ENCODE measurements at regions of chr16 and their contacts with region 1.

Region 1: DNA sequence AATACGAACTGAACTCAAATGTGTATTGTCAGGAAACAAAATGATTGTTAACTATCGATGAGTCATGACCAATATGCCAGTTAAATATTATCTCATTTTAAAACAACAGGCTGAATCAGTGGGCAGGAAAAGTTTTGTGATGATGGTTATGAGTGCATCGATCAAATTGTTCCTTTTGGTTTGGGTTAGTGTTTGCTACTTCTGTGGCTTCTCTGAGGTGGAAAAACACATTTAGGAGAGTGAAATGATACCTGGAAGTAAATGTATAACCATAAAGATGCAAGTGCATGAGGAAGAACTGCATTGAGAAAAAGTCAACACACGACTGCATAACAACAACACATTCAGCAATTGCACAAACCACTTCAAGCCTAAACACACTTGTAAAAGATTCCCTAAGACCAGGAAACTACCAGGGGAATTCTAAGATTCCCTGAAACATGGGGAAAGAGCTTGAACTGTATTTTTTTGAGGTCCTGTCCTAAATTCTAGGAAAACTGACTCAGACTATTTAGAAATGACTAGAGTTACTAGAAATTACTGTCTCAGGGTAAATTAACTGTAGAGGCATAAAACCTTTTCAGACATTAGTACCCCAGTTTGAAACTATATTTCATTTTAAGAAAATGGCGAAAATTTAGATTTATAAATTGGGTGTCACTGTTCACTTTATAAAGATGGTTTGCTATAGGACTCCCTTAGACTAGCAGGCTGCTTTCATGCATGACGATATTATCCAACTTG is 44.8 kb downstream of the CDYL2 start:
- DNase-seq: no peak
- ATAC-seq: peak; percentile 71
- H3K4me3 Mint-ChIP-seq: no peak overlapping the region
- H3K27ac Mint-ChIP-seq: peak overlapping the region; percentile 66
- H3K4me1 Mint-ChIP-seq: peaks cover 10% of the 10 kb centered on the region
- H3K27me3 Mint-ChIP-seq: no peaks in the 10 kb centered on the region
- CTCF ChIP-seq: no peak

Region 2: DNA sequence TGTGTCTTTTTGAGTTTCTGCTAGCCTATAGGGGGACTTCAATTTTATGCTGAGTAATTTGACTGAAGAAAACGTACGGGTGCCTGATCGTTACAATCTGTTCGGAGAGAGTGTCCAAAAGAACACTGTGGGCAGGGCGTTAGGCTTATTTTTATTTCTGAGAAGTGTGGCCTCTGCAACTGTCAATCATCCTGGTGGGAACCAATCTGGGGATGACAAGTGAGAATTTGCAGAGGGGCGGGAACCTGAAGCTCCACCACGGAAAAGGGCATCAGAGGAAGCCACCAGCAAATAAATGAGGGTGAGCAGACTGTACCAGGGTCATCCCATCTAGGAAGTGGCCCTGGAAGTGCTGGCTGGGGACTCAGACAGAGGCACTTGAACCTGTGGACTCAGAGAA is 56.8 kb after region 1 on chr16:
- CTCF ChIA-PET with region 1: no interaction called
- POLR2A ChIA-PET with region 1: no interaction called
- intact Hi-C with region 1: loop called (anchors 5 kb)
- DNase-seq: no peak
- ATAC-seq: no peak
- H3K4me3 Mint-ChIP-seq: no peak overlapping the region
- H3K27ac Mint-ChIP-seq: no peak overlapping the region
- H3K4me1 Mint-ChIP-seq: no peaks in the 10 kb centered on the region
- H3K27me3 Mint-ChIP-seq: peaks cover 6% of the 10 kb centered on the region
- CTCF ChIP-seq: no peak

Measured in activated CD8-positive, alpha-beta T cell treated with anti-CD3 and anti-CD28 coated beads for 36 hours (primary cell).